Activated CD4-positive, alpha-beta T cell treated with anti-CD3 and anti-CD28 coated beads, Interleukin-2, amount 10 ng/mL, durations not matched to agents 24 days and 14 days (primary cell): ENCODE measurements at regions of chr15 and their contacts with region 1.

Region 1: GRCh38 chr15:48285329-48286214 is 45.7 kb upstream of the DUT start:
- DNase-seq: peak; percentile 85
- H3K4me3 Mint-ChIP-seq: no peak overlapping the region
- H3K27ac Mint-ChIP-seq: no peak overlapping the region
- H3K4me1 Mint-ChIP-seq: peaks cover 5% of the 10 kb centered on the region
- H3K27me3 Mint-ChIP-seq: peaks cover 10% of the 10 kb centered on the region

Region 2: GRCh38 chr15:46312133-46312740 is 1973.3 kb before region 1 on chr15:
- intact Hi-C with region 1: loop called (anchors 5 kb)
- DNase-seq: peak; percentile 85
- H3K4me3 Mint-ChIP-seq: no peak overlapping the region
- H3K27ac Mint-ChIP-seq: no peak overlapping the region
- H3K4me1 Mint-ChIP-seq: no peaks in the 10 kb centered on the region
- H3K27me3 Mint-ChIP-seq: no peaks in the 10 kb centered on the region

Region 3: GRCh38 chr15:48318131-48318530 is 32.6 kb after region 1 on chr15:
- intact Hi-C with region 1: no loop called
- DNase-seq: peak; percentile 20
- H3K4me3 Mint-ChIP-seq: no peak overlapping the region
- H3K27ac Mint-ChIP-seq: no peak overlapping the region
- H3K4me1 Mint-ChIP-seq: no peaks in the 10 kb centered on the region
- H3K27me3 Mint-ChIP-seq: peaks cover 1% of the 10 kb centered on the region